T-cell (primary cell): ENCODE measurements at regions of chr13 and their contacts with region 1.

Region 1: DNA sequence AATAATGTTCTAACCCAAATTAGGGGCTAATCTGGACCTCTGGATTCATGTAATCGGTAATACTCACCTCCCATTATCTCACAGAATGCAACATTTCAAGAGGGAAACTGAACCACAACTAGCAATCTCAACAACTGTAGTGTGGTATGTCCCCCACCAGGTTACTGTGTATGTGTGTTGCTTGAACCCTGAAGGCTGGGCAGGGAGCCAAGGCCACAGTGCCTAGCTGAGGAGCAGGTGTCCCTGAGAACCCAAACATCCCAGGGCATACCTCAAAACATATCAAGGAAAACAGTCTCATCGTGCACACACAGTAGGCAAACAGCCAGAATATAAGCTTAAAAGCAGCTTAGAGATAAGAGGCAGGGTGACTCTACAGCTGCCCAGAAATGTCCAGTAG is 20.5 kb upstream of the NEK3 start:
- DNase-seq: no peak
- ATAC-seq: no peak
- H3K4me3 ChIP-seq: no peak overlapping the region
- H3K4me3 Mint-ChIP-seq: no peak overlapping the region
- H3K27ac ChIP-seq: no peak overlapping the region
- H3K27ac Mint-ChIP-seq: no peak overlapping the region
- H3K4me1 ChIP-seq: no peaks in the 10 kb centered on the region
- H3K4me1 Mint-ChIP-seq: peaks cover 0 to 2% (median 0%) of the 10 kb centered on the region in 3 donors
- H3K27me3 ChIP-seq: no peaks in the 10 kb centered on the region
- H3K27me3 Mint-ChIP-seq: no peaks in the 10 kb centered on the region

Region 2: DNA sequence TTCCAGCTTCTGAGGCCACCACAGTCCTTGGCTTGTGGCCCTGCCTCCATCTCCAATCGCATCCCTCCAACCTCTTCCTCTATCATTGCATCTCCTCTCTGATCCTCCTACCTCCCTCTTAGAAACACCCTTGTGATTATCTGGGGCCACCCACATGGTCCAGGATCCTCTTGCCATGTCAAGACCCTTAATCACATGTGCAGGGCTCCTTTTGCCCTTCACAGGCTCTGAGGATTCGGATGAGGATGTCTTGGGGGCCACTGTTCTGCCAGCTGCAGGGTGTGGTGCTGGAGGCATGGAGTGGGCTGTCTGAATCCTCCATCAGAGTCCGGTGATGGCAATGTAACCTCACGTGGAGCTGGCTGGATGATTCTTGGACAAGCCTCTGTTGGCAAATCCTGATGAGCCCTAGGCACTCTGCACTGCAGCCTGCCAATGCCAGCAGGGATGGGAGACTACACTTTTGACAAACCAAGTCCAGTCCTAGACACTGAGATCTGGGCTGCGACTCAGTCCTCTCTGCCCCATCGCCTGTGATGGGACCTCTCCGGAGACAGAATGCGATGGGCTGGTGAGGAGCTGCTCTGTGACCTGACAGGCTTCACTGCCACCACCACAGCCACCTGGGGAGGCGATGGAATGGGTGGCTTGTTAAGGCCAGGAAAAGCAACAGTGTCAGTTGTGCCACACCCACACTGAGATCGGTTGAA is 257.0 kb before region 1 on chr13:
- CTCF ChIA-PET with region 1: interaction called in 1 of 2 experiments, 13 read pairs
- POLR2A ChIA-PET with region 1: no interaction called
- DNase-seq: no peak
- ATAC-seq: no peak
- H3K4me3 ChIP-seq: no peak overlapping the region
- H3K4me3 Mint-ChIP-seq: no peak overlapping the region
- H3K27ac ChIP-seq: no peak overlapping the region
- H3K27ac Mint-ChIP-seq: no peak overlapping the region
- H3K4me1 ChIP-seq: peaks cover 0 to 6% of the 10 kb centered on the region in 2 experiments
- H3K4me1 Mint-ChIP-seq: peaks cover 19 to 33% (median 27%) of the 10 kb centered on the region in 3 donors
- H3K27me3 ChIP-seq: peaks cover 0 to 21% of the 10 kb centered on the region in 2 experiments
- H3K27me3 Mint-ChIP-seq: peaks cover 0 to 2% of the 10 kb centered on the region in 2 donors